ENCODE measurements at regions of chr5 and their contacts with region 1.

Region 1: DNA sequence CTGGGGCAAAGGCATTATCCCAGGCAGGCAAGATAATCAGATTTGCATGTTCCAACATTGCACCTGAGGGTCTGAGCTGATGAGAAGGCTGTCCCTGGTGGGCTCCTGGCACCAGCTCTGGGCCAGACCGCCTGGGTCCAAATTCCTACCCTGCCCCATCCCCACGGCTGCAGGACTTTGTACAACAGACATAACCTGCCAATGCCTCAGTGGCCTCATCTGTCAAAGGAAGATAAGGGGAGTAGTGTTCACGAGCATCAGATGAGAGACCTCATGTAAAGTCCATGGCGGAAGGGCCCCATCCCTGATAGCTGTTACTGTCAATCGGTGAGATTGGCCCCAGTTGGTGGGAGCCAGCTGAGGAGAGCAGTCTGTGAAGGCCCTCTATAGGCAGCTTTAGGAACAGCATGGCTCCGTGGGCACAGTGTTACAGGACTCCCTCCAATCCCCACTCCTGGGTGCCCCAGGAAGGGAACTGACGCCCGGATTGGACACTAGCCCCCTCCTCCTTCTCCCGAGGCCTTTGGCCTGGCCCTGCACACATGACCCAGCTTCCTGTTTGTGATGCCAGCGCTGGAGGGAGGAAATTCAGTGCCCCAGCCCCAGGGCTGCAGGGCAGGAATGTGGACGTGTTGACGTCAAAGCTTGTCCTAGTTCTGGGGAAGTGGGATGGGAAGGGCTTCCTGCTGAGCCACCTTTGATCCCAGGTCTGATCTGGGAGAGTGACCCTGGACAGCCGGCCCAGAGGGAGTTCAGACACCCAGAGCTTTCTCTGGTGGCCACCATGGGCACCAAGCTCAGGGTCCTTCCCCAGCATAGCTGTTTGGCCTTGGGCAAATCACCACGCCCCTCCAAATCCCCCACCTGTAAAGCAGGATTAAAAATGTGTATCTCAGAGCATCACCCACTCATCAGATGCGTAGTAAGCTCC is 56.2 kb downstream of the DUSP1 start:
- DNase-seq: peak; percentile 90
- ATAC-seq: peak; percentile 89
- H3K4me3 ChIP-seq: no peak overlapping the region
- H3K27ac ChIP-seq: peak overlapping the region; percentile 81
- H3K4me1 ChIP-seq: peaks cover 41% of the 10 kb centered on the region
- H3K27me3 ChIP-seq: no peaks in the 10 kb centered on the region
- CTCF ChIP-seq: peak; percentile 89

Region 2: DNA sequence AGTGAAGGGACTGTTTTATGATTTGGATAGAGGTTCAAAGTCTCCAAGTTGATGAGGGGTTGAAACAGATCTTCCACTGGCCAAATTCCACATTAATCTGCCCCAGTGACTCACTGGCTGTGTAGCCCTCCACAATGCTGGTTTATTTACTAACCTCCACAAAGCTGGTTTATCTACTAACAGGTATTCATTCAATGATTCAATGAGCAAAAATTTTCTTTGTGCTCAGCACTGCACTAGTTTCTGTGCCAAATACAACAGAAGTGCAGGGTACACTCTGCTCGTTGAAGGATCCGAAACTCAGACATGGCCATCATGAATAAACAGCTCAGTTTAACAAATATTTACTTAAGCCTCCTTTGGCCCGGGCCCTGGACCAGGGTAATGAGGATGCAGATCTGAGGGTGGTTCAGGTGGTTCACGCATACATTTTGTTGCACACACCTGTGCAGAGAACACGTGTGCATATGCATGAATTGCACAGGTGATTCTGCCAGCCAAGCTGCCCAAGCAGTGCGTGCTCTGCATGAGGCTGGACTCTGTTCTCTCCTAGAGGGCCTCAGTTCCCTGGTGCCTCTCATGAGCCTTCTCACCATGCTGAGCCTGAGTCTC is 331.5 kb before region 1 on chr5:
- intact Hi-C with region 1: no loop called
- DNase-seq: no peak
- ATAC-seq: peak; percentile 70
- H3K4me3 ChIP-seq: no peak overlapping the region
- H3K27ac ChIP-seq: no peak overlapping the region
- H3K4me1 ChIP-seq: no peaks in the 10 kb centered on the region
- H3K27me3 ChIP-seq: no peaks in the 10 kb centered on the region
- CTCF ChIP-seq: no peak

Region 3: GRCh38 chr5:172764849-172765765 is 50.4 kb after region 1 on chr5:
- intact Hi-C with region 1: loop called (anchors 5 kb)
- DNase-seq: peak; percentile 96
- ATAC-seq: peak; percentile 82
- H3K4me3 ChIP-seq: peak overlapping the region; percentile 84
- H3K27ac ChIP-seq: peak overlapping the region; percentile 99
- H3K4me1 ChIP-seq: peaks cover 16% of the 10 kb centered on the region
- H3K27me3 ChIP-seq: no peaks in the 10 kb centered on the region
- CTCF ChIP-seq: no peak

Region 4: GRCh38 chr5:172860520-172861443 is 146.0 kb after region 1 on chr5:
- intact Hi-C with region 1: no loop called
- DNase-seq: peak; percentile 89
- ATAC-seq: peak; percentile 88
- H3K4me3 ChIP-seq: no peak overlapping the region
- H3K27ac ChIP-seq: peak overlapping the region; percentile 90
- H3K4me1 ChIP-seq: peaks cover 62% of the 10 kb centered on the region
- H3K27me3 ChIP-seq: no peaks in the 10 kb centered on the region
- CTCF ChIP-seq: no peak

Measured in upper lobe of right lung (tissue), 1 donor.